HCT116 (cell line): ENCODE measurements at regions of chr15 and their contacts with region 1.

Region 1: DNA sequence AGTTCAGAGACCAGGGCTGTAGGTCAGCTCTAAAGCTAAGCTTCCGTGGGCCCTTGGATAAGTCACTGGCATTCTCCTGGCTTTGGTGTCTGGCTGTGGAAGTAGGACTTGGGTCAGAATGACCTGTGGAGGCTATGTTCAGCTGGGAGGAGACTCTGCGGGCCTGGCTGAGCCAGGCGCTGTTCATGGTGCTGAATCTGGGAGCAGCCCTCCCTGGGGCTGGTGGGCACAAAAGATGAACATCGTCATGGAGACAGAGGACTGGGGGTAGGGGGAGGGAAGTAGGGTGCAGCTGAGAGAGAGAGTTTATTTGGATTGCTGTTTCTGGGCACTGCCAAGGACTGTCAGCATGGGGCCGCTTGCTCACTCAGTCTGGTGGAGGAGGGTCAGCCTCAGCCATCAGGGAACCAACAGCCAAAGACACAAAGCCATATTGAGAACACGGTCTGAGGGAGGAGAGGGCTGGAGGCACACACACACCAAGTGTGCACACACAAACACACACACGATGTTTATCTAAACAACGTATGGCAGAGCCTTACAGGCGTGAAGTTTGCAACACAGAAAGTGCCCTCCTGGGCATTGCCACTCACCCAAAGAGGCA is 120.7 kb upstream of the LINGO1 start:
- DNase-seq: no peak
- ATAC-seq: no peak
- H3K4me3 ChIP-seq: no peak overlapping the region
- H3K27ac ChIP-seq: no peak overlapping the region
- H3K4me1 ChIP-seq: peaks cover 2 to 3% of the 10 kb centered on the region in 2 experiments; a peak in 3 of 4 replicates
- H3K27me3 ChIP-seq: no peaks in the 10 kb centered on the region
- CTCF ChIP-seq: no peak
- POLR2A ChIP-seq: no peak
- RAD21 ChIP-seq: no peak

Region 2: GRCh38 chr15:77387365-77388105 is 365.8 kb before region 1 on chr15:
- CTCF ChIA-PET with region 1: no interaction called
- POLR2A ChIA-PET with region 1: no interaction called
- RAD21 ChIA-PET with region 1: no interaction called
- intact Hi-C with region 1: no loop called
- DNase-seq: no peak
- ATAC-seq: no peak
- H3K4me3 ChIP-seq: no peak overlapping the region
- H3K27ac ChIP-seq: no peak overlapping the region
- H3K4me1 ChIP-seq: no peaks in the 10 kb centered on the region
- H3K27me3 ChIP-seq: no peaks in the 10 kb centered on the region
- CTCF ChIP-seq: no peak
- POLR2A ChIP-seq: no peak
- RAD21 ChIP-seq: no peak

Region 3: GRCh38 chr15:77702211-77702957 is 51.0 kb before region 1 on chr15:
- CTCF ChIA-PET with region 1: no interaction called
- POLR2A ChIA-PET with region 1: no interaction called
- RAD21 ChIA-PET with region 1: no interaction called
- intact Hi-C with region 1: loop called (anchors 10 kb)
- DNase-seq: no peak
- ATAC-seq: peak; percentile 77
- H3K4me3 ChIP-seq: no peak overlapping the region
- H3K27ac ChIP-seq: no peak overlapping the region
- H3K4me1 ChIP-seq: no peaks in the 10 kb centered on the region
- H3K27me3 ChIP-seq: peaks cover 19% of the 10 kb centered on the region; the same call in 1 of the 2 replicates
- CTCF ChIP-seq: no peak
- POLR2A ChIP-seq: no peak
- RAD21 ChIP-seq: no peak